Caco-2 (cell line): ENCODE measurements at regions of chr15 and their contacts with region 1.

Region 1: GRCh38 chr15:28021281-28022039 is 77.7 kb downstream of the OCA2 start:
- DNase-seq: peak in 1 of 2 experiments; percentile 47
- H3K4me3 ChIP-seq: no peak overlapping the region
- H3K4me3 Mint-ChIP-seq: no peak overlapping the region
- H3K27ac Mint-ChIP-seq: no peak overlapping the region
- H3K4me1 ChIP-seq: peaks cover 9% of the 10 kb centered on the region; the same call in 1 of the 2 replicates
- H3K4me1 Mint-ChIP-seq: no peaks in the 10 kb centered on the region
- H3K27me3 ChIP-seq: no peaks in the 10 kb centered on the region
- H3K27me3 Mint-ChIP-seq: no peaks in the 10 kb centered on the region
- CTCF ChIP-seq: peak; percentile 42 to 52

Region 2: GRCh38 chr15:28043691-28044091 is 22.2 kb after region 1 on chr15:
- CTCF ChIA-PET with region 1: interaction called, 11 read pairs
- POLR2A ChIA-PET with region 1: no interaction called
- intact Hi-C with region 1: no loop called
- DNase-seq: peak in 1 of 2 experiments; percentile 63
- H3K4me3 ChIP-seq: no peak overlapping the region
- H3K4me3 Mint-ChIP-seq: peak overlapping the region; percentile 7
- H3K27ac Mint-ChIP-seq: no peak overlapping the region
- H3K4me1 ChIP-seq: peaks cover 24% of the 10 kb centered on the region
- H3K4me1 Mint-ChIP-seq: peaks cover 15% of the 10 kb centered on the region
- H3K27me3 ChIP-seq: no peaks in the 10 kb centered on the region
- H3K27me3 Mint-ChIP-seq: no peaks in the 10 kb centered on the region
- CTCF ChIP-seq: no peak

Region 3: GRCh38 chr15:28051955-28052633 is 30.6 kb after region 1 on chr15:
- CTCF ChIA-PET with region 1: interaction called, 10 read pairs
- POLR2A ChIA-PET with region 1: no interaction called
- intact Hi-C with region 1: loop called (anchors 1 kb)
- DNase-seq: no peak
- H3K4me3 ChIP-seq: no peak overlapping the region
- H3K4me3 Mint-ChIP-seq: no peak overlapping the region
- H3K27ac Mint-ChIP-seq: no peak overlapping the region
- H3K4me1 ChIP-seq: peaks cover 9% of the 10 kb centered on the region
- H3K4me1 Mint-ChIP-seq: peaks cover 6% of the 10 kb centered on the region
- H3K27me3 ChIP-seq: no peaks in the 10 kb centered on the region
- H3K27me3 Mint-ChIP-seq: no peaks in the 10 kb centered on the region
- CTCF ChIP-seq: no peak

Region 4: DNA sequence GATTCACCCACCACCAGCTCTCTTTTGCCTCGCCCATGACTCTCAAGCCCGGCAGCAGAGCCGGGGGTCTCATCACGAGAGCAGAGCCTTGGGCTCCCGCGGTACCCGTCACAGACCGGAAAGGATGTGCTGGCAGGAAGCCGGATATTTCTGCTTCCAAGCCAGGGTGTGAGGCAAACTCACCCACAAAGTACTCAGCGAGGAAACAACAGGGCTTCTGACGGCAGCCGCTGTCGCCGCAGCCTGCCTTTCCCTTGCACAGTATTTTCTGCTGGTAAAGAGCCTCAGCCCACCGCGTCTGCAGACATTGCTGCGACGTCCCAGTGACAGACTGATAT is 1128.2 kb after region 1 on chr15:
- CTCF ChIA-PET with region 1: no interaction called
- POLR2A ChIA-PET with region 1: no interaction called
- intact Hi-C with region 1: no loop called
- DNase-seq: no peak
- H3K4me3 ChIP-seq: no peak overlapping the region
- H3K4me3 Mint-ChIP-seq: no peak overlapping the region
- H3K27ac Mint-ChIP-seq: no peak overlapping the region
- H3K4me1 ChIP-seq: no peaks in the 10 kb centered on the region
- H3K4me1 Mint-ChIP-seq: no peaks in the 10 kb centered on the region
- H3K27me3 ChIP-seq: no peaks in the 10 kb centered on the region
- H3K27me3 Mint-ChIP-seq: peaks cover 3% of the 10 kb centered on the region
- CTCF ChIP-seq: no peak